Right ventricle myocardium inferior (tissue), 1 donor: ENCODE measurements at regions of chr12 and their contacts with region 1.

Region 1: GRCh38 chr12:79782197-79782900 is 91.6 kb upstream of the PAWR start:
- DNase-seq: no peak
- ATAC-seq: peak; percentile 77

Region 2: GRCh38 chr12:79818856-79819255 is 36.5 kb after region 1 on chr12:
- intact Hi-C with region 1: loop called (anchors 5 kb)
- DNase-seq: no peak
- ATAC-seq: peak; percentile 59